ENCODE measurements at regions of chr2 and their contacts with region 1.

Region 1: DNA sequence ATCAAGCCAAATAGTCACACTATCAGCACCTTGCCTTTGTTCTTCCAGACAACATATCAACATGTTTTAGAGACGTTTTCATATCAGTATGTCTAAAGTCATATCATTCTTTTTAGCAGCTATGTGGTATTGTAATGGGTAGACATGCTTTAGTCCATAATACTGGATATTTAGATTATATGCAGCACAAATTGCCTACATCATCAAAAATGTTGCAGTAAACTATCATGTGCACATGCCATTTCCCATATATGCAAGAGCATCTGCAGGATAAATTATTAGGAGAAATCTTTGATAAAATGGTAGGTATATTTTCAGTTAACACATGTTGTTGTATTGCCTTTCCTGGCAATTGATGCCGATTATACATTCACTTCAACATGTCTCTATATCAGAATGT is 636.5 kb downstream of the XIRP2 start:
- DNase-seq: no peak
- ATAC-seq: no peak
- H3K4me3 ChIP-seq: no peak overlapping the region
- H3K27ac ChIP-seq: no peak overlapping the region
- H3K4me1 ChIP-seq: no peaks in the 10 kb centered on the region
- H3K27me3 ChIP-seq: peaks cover 6% of the 10 kb centered on the region; the same call in 1 of the 2 replicates
- CTCF ChIP-seq: no peak
- POLR2A ChIP-seq: no peak
- RAD21 ChIP-seq: no peak

Region 2: DNA sequence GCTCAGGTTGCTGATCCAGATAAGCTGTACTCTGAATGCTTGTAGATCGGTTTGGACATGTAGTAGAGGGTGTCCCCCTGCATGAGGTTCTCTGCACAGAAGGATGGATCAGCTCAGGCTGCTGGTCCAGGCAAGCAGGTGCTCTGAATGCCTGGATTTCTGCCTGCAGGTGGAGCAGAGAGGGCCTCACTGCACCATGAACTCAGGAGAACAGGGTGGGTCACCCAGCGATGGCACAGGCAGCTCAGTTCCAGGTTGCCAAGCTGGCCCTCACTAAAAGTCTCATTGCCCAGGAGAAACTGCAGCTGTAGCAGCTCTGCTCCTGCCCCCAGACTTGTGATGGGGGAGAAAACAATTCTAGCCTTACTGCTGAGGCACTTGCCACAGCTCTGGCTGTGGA is 144.7 kb before region 1 on chr2:
- CTCF ChIA-PET with region 1: no interaction called
- POLR2A ChIA-PET with region 1: no interaction called
- RAD21 ChIA-PET with region 1: no interaction called
- intact Hi-C with region 1: no loop called
- DNase-seq: no peak
- ATAC-seq: no peak
- H3K4me3 ChIP-seq: no peak overlapping the region
- H3K27ac ChIP-seq: no peak overlapping the region
- H3K4me1 ChIP-seq: no peaks in the 10 kb centered on the region
- H3K27me3 ChIP-seq: 0 out of 2 replicates have a peak, but pooled peaks cover 3% of the 10 kb centered on the region
- CTCF ChIP-seq: no peak
- POLR2A ChIP-seq: no peak
- RAD21 ChIP-seq: no peak

Region 3: DNA sequence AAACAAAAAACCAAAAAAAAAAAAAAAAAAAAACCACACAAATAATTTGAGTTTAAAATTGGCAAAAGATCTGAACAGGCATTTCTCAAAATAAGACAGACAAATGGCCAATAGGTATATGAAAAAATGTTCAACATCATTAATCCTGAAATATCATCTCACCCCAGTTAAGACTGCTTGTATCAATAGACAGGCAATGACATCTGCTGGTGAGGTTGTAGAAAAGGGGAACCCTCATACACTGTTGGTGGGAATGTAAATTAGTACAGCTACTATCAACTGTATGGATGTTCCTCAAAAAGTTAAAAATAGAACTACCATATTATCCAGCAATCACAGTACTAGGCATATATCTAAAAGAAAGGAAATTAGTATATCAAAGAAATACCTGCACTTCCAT is 113.4 kb before region 1 on chr2:
- CTCF ChIA-PET with region 1: no interaction called
- POLR2A ChIA-PET with region 1: no interaction called
- RAD21 ChIA-PET with region 1: no interaction called
- intact Hi-C with region 1: no loop called
- DNase-seq: no peak
- ATAC-seq: no peak
- H3K4me3 ChIP-seq: no peak overlapping the region
- H3K27ac ChIP-seq: no peak overlapping the region
- H3K4me1 ChIP-seq: no peaks in the 10 kb centered on the region
- H3K27me3 ChIP-seq: no peaks in the 10 kb centered on the region
- CTCF ChIP-seq: no peak; a peak in 1 of 6 replicates
- POLR2A ChIP-seq: no peak
- RAD21 ChIP-seq: peak; percentile 29; the same call in 1 of the 2 replicates

Region 4: GRCh38 chr2:167489325-167489724 is 35.5 kb before region 1 on chr2:
- CTCF ChIA-PET with region 1: no interaction called
- POLR2A ChIA-PET with region 1: no interaction called
- RAD21 ChIA-PET with region 1: no interaction called
- intact Hi-C with region 1: loop called (anchors 2 kb)
- DNase-seq: no peak
- ATAC-seq: no peak
- H3K4me3 ChIP-seq: no peak overlapping the region
- H3K27ac ChIP-seq: no peak overlapping the region
- H3K4me1 ChIP-seq: no peaks in the 10 kb centered on the region
- H3K27me3 ChIP-seq: 0 out of 2 replicates have a peak, but pooled peaks cover 4% of the 10 kb centered on the region
- CTCF ChIP-seq: no peak
- POLR2A ChIP-seq: no peak
- RAD21 ChIP-seq: no peak

Region 5: GRCh38 chr2:167756446-167756845 is 231.7 kb after region 1 on chr2:
- CTCF ChIA-PET with region 1: no interaction called
- POLR2A ChIA-PET with region 1: no interaction called
- RAD21 ChIA-PET with region 1: no interaction called
- intact Hi-C with region 1: no loop called
- DNase-seq: no peak
- ATAC-seq: no peak
- H3K4me3 ChIP-seq: no peak overlapping the region
- H3K27ac ChIP-seq: no peak overlapping the region
- H3K4me1 ChIP-seq: no peaks in the 10 kb centered on the region
- H3K27me3 ChIP-seq: peaks cover 39% of the 10 kb centered on the region
- CTCF ChIP-seq: no peak
- POLR2A ChIP-seq: no peak
- RAD21 ChIP-seq: no peak

Measured in HCT116 (cell line).